Activated CD4-positive, alpha-beta memory T cell treated with anti-CD3 and anti-CD28 coated beads for 36 hours (primary cell): ENCODE measurements at regions of chr17 and their contacts with region 1.

Region 1: DNA sequence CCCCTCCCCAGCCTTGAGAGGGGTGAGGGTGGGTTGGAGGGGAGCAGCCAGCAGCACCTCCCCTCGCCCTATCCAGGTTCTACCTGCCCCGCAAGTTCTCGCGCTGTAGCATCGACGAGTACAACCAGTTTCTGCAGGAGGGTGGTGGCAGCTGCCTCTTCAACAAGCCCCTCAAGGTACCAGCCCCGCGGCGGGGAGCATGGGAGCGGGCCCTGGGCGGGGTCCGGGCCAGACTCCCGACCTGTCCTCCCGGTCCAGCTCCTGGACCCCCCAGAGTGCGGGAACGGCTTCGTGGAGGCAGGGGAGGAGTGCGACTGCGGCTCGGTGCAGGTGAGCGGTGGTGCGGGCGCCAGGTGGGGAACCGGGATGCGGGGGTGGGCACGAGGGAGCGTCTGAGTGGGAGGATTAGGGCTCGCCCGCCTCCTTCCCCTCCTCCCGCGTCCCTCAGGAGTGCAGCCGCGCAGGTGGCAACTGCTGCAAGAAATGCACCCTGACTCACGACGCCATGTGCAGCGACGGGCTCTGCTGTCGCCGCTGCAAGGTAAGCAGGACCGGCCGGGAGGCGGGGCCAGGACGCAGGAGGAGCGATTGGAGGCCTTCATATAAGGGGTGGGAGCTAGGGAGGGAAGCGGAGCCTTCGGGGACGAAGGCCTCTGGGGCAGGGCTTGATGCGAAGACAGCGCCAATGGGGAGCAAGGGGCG is 16.5 kb downstream of the ADAM11 start:
- DNase-seq: no peak
- H3K4me3 Mint-ChIP-seq: peak overlapping the region; percentile 80
- H3K27ac Mint-ChIP-seq: peak overlapping the region; percentile 42
- H3K4me1 Mint-ChIP-seq: peaks cover 5% of the 10 kb centered on the region
- H3K27me3 Mint-ChIP-seq: peaks cover 5% of the 10 kb centered on the region

Region 2: DNA sequence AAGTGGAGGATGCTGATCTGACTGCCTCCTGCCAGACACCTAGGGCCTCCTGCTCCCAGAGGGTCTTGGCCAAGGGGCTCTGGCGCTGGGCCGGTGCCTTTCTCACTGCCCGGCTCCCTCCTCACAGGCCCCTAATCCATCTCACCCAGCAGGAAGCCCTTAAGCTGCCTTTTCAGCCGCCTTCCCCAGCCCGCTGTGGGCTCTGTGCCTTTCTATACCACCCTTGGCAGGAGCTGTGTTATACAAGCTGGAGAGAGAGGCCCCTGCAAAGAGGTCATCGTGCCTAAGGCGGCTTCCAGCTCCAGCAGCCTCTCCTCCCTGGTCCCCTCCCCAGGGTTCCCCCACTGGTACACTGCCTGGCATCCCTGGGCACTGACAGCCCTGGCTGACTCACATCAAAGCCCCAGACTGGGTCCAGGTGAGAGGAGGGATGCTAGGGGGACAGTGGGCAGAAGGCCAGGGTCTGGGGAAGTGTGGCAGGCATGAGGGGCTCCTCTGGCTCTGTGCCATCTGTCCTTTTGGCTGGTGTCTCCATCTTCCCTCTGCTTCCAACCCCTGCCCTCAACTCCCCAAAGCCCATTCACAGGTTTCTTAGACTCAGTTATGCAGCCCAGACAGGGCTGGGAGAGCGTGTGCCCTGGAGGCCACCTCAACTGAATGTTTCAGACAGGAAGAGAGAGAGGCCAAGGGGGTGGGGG is 233.3 kb before region 1 on chr17:
- CTCF ChIA-PET with region 1: no interaction called
- POLR2A ChIA-PET with region 1: no interaction called
- intact Hi-C with region 1: no loop called
- DNase-seq: no peak
- H3K4me3 Mint-ChIP-seq: no peak overlapping the region
- H3K27ac Mint-ChIP-seq: no peak overlapping the region
- H3K4me1 Mint-ChIP-seq: no peaks in the 10 kb centered on the region
- H3K27me3 Mint-ChIP-seq: peaks cover 25% of the 10 kb centered on the region

Region 3: DNA sequence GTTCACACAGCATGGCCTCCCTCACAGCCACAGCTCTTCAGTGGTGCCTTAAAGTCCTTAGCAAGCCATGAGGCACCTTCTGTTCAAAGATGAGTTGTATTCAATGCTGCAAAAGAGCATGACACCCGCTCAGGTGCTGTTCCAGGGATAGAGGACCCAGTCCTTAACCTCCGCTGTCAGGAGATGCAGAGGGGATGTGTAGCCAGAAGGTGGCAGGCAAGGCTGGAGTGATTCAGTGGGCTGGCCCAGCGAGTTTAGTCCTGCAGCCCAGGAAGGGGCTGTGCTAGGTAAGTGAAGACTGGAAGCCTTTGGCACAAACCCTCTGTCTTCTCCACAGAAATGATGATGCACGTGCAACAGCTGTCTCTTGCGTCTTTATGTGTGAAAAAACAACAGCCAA is 41.5 kb before region 1 on chr17:
- CTCF ChIA-PET with region 1: no interaction called
- POLR2A ChIA-PET with region 1: no interaction called
- intact Hi-C with region 1: no loop called
- DNase-seq: no peak
- H3K4me3 Mint-ChIP-seq: no peak overlapping the region
- H3K27ac Mint-ChIP-seq: no peak overlapping the region
- H3K4me1 Mint-ChIP-seq: no peaks in the 10 kb centered on the region
- H3K27me3 Mint-ChIP-seq: no peaks in the 10 kb centered on the region

Region 4: DNA sequence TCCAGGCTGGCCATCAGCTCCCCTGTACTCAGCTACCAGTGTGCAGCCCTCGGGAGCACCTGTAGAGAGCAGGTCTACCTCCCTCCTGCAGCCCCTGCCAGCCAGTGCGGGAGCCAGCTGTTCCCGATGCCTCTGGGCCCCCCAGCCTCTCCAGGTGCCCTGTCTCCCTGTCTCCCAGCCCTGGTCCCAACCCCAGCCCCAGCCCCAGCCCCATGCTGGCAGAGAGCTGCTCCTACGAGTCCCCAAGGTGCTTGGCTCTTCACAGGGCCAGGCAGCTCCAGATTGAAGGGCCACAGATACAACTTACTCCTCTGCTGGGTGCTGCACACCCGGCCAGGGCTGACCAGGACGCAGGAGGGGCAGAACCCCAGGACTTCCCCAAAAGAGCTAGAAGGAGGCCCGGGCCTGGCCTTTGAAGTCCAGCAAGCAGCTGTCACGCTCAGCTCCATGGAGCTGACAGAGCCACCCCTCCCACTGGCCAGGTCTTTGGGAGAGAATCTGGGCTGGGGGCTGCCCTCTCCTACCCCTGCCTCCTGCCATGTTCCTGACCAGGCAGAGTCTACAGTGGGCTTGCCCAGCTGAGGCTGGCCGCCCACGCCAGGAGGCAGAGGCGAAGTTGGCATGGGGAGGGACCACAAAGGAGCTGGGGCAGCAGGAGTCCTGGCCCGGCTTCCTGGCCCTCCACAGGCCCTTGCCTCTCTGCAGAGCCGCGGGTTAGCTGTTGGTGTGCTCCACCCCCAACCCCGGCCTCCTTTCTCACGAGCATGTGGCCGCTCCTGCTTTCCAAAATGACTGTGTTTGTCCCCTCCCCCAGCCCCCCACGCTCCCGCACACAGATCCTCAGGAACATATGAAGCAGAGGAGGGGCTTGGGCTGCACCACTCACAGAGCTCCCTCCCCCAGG is 26.0 kb before region 1 on chr17:
- CTCF ChIA-PET with region 1: no interaction called
- POLR2A ChIA-PET with region 1: no interaction called
- intact Hi-C with region 1: no loop called
- DNase-seq: no peak
- H3K4me3 Mint-ChIP-seq: no peak overlapping the region
- H3K27ac Mint-ChIP-seq: no peak overlapping the region
- H3K4me1 Mint-ChIP-seq: no peaks in the 10 kb centered on the region
- H3K27me3 Mint-ChIP-seq: no peaks in the 10 kb centered on the region

Region 5: DNA sequence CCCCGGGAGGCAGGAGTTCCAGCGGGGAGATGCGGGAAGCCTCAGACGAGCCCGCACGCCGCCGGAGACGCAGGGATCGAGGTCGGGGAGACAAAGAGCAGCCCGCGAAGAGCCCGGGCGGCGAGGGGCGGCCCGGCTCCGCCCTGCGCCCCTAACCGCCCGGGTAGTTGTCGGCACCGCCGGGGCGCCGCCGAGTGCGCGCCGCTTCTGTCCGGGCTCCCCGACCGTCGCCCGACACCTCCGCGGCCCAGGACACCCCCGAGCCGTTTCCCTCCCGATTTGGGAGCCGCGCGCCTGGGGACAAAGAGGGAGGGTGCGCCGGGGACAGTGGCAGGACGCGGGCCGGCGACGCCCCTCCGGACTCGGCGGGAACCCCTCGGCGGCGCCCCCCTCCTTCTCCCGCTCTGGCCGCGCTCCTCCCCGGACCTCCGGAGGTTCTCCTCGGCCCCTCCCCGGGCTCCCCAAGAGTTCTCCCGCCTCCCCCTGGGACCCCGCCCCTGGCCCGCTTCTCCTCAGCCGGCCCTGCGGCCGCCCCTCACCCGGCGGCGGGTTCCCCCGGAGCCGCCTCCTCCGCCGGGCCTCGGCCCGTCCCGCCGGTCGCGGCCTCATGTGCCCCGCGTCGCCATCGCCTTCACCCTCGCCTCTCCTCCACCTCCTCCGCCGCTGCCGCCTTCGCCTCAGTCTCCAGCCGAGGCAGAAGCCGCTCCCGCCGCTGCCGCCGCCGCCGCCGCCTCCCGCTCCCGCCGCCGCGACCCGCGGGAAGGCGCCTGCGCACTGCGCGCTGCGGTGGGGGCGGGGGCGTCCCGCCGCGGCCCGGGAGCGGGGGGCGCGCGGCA is 54.5 kb after region 1 on chr17 and contains the start of gene GJC1:
- CTCF ChIA-PET with region 1: interaction called, 10 read pairs
- POLR2A ChIA-PET with region 1: no interaction called
- intact Hi-C with region 1: loop called (anchors 1 kb)
- DNase-seq: peak; percentile 20
- H3K4me3 Mint-ChIP-seq: peak within 1 kb of the TSS; percentile 68
- H3K27ac Mint-ChIP-seq: no peak within 1 kb of the TSS
- H3K4me1 Mint-ChIP-seq: peaks cover 12% of the 10 kb centered on the region
- H3K27me3 Mint-ChIP-seq: peaks cover 46% of the 10 kb centered on the region
- total RNA-seq, gene GJC1: 1.9 to 2.7 TPM

Region 6: DNA sequence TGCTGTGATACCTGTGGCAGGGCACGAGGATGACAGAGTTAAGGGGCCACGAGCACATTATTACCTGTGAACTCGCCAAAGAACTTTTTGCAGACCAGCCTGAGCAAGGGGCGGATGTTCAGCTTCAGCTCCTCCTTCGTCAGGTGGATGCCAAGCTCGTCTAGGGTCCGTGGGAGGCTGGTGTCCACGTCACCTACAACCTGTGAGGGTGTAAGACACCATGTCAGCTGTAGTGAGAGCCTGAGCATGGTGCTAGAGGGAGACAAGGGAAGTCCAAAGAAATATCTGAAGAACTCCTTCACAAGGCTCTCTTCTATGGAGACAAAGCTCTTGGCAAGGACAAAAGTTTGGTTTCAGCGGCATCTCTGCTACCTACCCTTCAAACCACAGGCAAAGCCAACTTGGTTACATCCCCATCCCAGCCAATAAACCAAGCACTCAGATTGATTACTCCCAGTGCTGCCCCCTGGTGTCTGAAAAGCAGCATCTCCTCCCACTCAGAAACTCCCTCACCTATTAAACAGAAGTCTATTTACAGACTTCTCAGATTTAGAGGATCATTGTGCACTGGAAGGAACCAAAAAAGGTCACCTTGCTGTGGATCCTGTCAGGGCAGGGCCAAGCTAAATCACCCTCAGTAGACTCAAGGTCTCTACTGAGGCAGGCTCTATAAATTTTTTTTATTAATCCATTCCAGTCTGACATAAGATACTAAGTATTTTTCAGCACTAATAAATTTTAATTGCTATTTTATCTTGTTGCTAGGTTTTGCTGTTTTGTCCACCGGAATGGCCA is 89.8 kb after region 1 on chr17:
- CTCF ChIA-PET with region 1: interaction called, 125 read pairs
- POLR2A ChIA-PET with region 1: interaction called, 3 read pairs
- intact Hi-C with region 1: loop called (anchors 1 kb)
- DNase-seq: peak; percentile 69
- H3K4me3 Mint-ChIP-seq: no peak overlapping the region
- H3K27ac Mint-ChIP-seq: no peak overlapping the region
- H3K4me1 Mint-ChIP-seq: no peaks in the 10 kb centered on the region
- H3K27me3 Mint-ChIP-seq: no peaks in the 10 kb centered on the region

Region 7: GRCh38 chr17:44878627-44879221 is 103.4 kb after region 1 on chr17:
- CTCF ChIA-PET with region 1: interaction called, 40 read pairs
- POLR2A ChIA-PET with region 1: no interaction called
- intact Hi-C with region 1: no loop called
- DNase-seq: peak; percentile 24
- H3K4me3 Mint-ChIP-seq: no peak overlapping the region
- H3K27ac Mint-ChIP-seq: no peak overlapping the region
- H3K4me1 Mint-ChIP-seq: no peaks in the 10 kb centered on the region
- H3K27me3 Mint-ChIP-seq: no peaks in the 10 kb centered on the region